ENCODE measurements at regions of chr3 and their contacts with region 1.

Region 1: GRCh38 chr3:71064288-71064955 is 519.1 kb downstream of the FOXP1 start:
- DNase-seq: peak in 1 of 2 experiments; percentile 39
- H3K4me3 ChIP-seq: peak overlapping the region; percentile 54; the same call in 1 of the 2 replicates
- H3K27ac ChIP-seq: no peak overlapping the region
- H3K4me1 ChIP-seq: peaks cover 3% of the 10 kb centered on the region; the same call in 1 of the 2 replicates
- H3K27me3 ChIP-seq: no peaks in the 10 kb centered on the region
- CTCF ChIP-seq: no peak

Region 2: DNA sequence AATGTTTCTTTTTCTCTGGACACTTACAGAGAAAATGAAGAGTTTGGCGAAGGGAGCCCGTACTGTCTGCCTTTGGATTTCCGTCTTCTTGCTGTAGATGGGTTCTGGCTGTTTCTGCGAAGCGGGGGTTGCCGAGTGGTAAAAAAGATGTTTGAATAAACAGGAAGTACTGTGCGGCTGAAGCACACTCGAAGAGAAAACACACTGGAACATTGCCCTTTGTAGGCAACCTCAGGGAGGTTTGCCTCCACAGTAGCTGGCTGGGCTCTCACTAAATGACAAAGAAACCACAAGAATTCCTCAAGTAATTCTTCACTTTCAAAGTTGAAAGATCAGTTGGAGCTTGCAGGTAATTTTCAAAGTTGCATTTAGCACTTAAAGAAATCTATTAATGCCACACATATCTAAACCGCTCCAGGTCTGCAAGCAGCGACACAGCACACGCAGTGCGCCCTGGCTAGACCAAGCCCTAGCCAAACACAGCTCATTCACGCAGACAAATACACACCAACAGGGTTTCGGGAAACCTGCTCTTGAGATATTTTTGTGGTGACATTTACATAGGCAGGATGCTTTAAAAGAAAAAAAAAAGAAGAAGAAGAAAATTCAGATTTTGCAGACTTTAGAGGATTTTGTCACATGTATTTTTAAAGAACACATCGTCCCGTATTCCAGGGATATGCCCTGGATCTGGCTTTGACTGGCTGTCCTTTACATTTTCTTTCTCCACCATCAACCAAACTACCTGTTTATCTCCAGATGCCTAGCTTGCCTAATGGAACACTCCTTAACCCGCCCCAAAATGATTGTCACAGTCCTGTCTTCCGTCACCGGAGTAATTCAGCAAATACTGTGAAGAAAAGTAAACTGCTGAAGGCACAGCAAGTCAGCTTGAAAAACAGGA is 66.3 kb after region 1 on chr3:
- CTCF ChIA-PET with region 1: no interaction called
- POLR2A ChIA-PET with region 1: no interaction called
- intact Hi-C with region 1: loop called (anchors 10 kb)
- DNase-seq: peak in 1 of 2 experiments; percentile 42
- H3K4me3 ChIP-seq: no peak overlapping the region
- H3K27ac ChIP-seq: no peak overlapping the region
- H3K4me1 ChIP-seq: no peaks in the 10 kb centered on the region
- H3K27me3 ChIP-seq: no peaks in the 10 kb centered on the region
- CTCF ChIP-seq: no peak

Region 3: DNA sequence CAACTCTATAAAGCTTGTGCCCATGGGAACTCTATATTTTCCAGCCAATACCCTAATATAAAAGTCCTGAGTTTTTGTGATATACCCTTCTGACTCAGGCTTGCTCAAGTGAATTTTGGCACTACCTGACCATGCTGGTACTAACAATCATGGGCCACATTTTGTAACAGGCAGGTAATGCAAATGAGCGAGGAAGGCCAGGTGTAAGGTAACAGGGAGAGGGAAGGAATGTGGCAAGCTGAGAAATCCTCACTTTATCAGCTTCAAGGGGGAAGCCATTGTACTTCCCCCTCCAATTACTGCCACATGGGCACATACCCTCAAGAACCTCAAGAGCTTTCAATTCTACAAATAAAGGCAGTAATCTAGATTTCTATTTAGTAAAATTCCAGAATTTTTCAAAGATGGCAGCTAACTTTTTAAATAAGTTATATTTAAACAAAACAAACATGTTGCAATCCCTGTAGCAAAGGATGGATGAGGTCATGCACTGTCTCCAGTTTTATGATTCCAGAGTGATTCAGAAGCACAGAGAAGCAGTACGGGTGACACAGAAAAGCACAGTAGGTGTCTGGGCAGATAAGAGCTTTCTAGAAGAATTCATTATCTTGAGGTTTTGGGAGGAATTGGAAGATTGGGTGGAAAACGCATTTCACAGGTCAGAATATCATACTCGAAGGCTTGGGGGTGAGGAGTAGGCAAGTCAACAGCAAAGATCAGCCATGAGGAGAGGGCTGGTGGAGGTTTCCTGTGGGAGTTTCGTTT is 431.5 kb after region 1 on chr3:
- CTCF ChIA-PET with region 1: no interaction called
- POLR2A ChIA-PET with region 1: interaction called, 10 read pairs
- intact Hi-C with region 1: no loop called
- DNase-seq: peak; percentile 28 to 68
- H3K4me3 ChIP-seq: no peak overlapping the region; the same call in 1 of the 2 replicates
- H3K27ac ChIP-seq: peak overlapping the region; percentile 68
- H3K4me1 ChIP-seq: peaks cover 19% of the 10 kb centered on the region
- H3K27me3 ChIP-seq: no peaks in the 10 kb centered on the region
- CTCF ChIP-seq: no peak

Measured in PC-9 (cell line).